ENCODE measurements at regions of chr2 and their contacts with region 1.

Region 1: DNA sequence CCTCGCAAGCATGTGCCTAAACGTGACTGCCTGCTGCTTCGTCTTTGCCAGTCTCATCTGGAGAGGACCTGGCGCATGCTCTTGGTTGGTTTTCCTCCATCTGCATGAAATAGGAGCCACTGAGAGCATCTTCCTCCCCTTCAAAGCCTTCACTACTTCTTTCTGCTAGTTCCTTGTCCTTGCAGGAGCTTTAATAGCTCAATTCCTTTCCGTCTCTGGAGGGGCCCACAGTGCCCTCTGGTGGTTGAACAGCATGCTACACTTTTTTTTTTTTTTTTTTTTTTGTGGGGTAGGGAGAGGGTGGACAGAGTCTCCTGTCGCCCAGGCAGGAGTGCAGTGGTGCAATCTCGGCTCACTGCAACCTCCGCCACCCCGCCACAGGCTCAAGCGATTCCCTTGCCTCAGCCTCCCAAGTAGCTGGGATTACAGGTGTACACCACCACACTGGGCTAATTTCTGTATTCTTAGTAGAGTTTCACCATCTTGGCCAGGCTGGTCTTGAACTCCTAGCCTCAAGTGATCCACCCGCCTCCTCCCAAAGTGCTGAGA is 59.6 kb downstream of the SP110 start:
- DNase-seq: peak; percentile 7
- H3K4me3 ChIP-seq: no peak overlapping the region
- H3K27ac ChIP-seq: no peak overlapping the region
- H3K27me3 ChIP-seq: no peaks in the 10 kb centered on the region
- CTCF ChIP-seq: peak; percentile 80

Region 2: DNA sequence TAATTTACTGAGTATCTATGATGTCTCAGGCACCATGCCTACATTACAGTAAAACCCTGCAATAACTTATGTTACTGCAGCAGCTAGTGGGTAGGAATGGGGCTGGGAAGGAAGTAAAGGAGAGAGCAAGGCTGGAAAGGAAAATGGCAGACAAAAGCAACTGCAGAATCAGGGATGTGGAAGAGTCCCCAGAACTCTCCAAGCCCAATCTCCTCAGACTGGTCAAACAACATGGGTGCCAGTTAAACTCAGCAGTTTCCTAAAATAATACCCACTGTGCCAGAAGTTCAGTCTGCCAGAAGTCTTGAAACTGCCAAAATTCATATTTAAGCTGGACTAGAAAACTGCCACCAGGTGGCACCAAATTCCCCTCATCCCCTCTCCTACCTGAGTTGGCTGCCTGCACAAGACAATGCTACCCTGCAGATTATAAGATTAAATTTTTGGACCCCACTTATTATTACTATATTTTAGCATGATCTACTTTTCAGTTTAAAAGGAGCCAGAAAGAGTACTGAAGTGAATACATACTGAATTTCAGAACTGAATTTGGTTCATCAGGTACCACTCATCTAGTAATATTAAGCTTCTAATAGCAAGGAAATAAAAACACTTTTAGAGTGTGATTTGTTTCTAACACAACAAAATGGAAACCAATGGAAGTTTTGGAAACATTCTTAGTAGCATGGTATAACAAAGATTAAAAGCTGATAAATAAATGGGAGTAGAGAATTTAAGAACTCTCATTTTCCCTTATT is 359.0 kb before region 1 on chr2:
- CTCF ChIA-PET with region 1: interaction called, 11 read pairs
- POLR2A ChIA-PET with region 1: no interaction called
- DNase-seq: peak; percentile 15
- H3K4me3 ChIP-seq: no peak overlapping the region
- H3K27ac ChIP-seq: no peak overlapping the region
- H3K27me3 ChIP-seq: no peaks in the 10 kb centered on the region
- CTCF ChIP-seq: peak; percentile 81

Region 3: GRCh38 chr2:230023309-230023708 is 136.9 kb before region 1 on chr2:
- CTCF ChIA-PET with region 1: interaction called, 12 read pairs
- POLR2A ChIA-PET with region 1: no interaction called
- DNase-seq: no peak
- H3K4me3 ChIP-seq: no peak overlapping the region
- H3K27ac ChIP-seq: no peak overlapping the region
- H3K27me3 ChIP-seq: no peaks in the 10 kb centered on the region
- CTCF ChIP-seq: no peak

Region 4: GRCh38 chr2:230130668-230131364 is 29.4 kb before region 1 on chr2:
- CTCF ChIA-PET with region 1: interaction called, 20 read pairs
- POLR2A ChIA-PET with region 1: no interaction called
- DNase-seq: peak; percentile 81
- H3K4me3 ChIP-seq: no peak overlapping the region
- H3K27ac ChIP-seq: peak overlapping the region; percentile 87
- H3K27me3 ChIP-seq: no peaks in the 10 kb centered on the region
- CTCF ChIP-seq: no peak

Region 5: DNA sequence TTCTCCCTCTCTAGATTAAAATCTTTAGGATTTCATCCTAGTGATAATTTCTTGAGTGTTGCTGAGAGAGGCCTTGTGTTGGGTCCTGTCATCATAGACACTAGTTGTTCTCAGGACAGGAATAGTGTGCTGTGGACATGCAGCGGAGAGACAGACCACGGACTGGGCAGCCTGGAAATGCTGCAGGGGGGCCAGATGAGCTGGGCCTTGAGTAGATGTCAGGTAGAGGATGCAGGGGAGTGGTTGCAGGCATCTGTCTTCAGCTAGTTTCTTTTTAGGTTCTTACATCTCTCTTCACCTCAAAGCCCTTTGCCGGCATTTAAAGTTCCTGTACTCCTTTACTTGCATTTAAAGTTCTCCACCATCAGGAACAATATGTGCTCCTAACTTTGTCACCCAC is 16.8 kb after region 1 on chr2:
- CTCF ChIA-PET with region 1: interaction called, 38 read pairs
- POLR2A ChIA-PET with region 1: no interaction called
- DNase-seq: no peak
- H3K4me3 ChIP-seq: no peak overlapping the region
- H3K27ac ChIP-seq: no peak overlapping the region
- H3K27me3 ChIP-seq: no peaks in the 10 kb centered on the region
- CTCF ChIP-seq: no peak

Region 6: DNA sequence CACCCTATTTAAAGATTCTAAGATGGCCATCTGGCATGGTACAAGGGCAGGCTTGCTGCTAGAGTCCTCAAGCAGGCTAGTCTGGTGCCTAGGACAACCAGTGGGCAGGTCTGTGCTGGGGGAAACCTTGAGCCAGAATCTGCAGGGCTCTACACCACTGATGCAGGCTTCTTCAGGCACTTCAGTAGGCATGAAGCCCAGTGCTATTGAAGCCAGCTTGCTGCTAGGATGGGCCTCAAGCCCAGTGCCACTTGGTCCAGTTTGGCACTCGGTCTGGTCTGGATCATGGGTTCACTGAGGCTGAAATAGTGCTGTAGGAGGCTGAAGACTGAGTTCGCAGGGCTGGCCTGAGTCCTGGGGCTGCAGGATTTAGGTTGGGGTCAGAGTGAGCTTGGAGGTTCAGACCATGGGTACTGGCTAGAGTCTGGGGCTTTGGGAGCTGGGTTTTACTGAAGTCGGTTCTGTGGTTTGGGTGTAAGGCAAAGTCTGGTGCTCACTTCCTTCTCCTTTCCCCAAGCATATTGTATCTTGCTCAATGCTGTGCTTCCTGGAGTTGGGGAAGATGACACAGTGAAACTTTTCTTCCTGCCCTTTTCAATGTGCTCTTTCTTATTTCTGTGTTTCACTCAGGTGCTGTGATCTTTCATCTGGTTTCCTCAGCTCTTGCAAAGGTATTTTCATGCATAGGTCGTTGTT is 297.0 kb after region 1 on chr2:
- CTCF ChIA-PET with region 1: no interaction called
- POLR2A ChIA-PET with region 1: no interaction called
- DNase-seq: no peak
- H3K4me3 ChIP-seq: no peak overlapping the region
- H3K27ac ChIP-seq: no peak overlapping the region
- H3K27me3 ChIP-seq: no peaks in the 10 kb centered on the region
- CTCF ChIP-seq: no peak